ENCODE measurements at regions of chr7 and their contacts with region 1.

Region 1: DNA sequence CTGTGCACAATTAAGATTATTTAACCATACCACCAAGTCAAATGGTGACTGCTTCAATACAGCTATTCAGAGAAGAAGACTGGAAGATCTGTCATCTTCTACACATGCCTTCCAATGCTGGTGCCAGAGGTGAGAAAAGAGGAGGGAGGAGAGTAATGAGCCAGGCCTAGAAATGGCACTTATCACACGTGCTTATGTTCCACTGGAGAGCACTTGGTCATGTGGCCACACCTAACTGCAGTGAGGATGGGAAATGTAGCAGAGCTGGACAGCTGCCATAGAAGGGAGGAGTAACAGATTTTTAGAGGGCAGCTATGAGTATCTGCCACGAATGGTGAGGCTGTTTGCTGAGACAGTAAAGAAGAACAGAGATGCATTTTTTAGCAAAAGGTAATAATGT is 77.1 kb downstream of the MPLKIP start:
- DNase-seq: no peak
- H3K4me3 ChIP-seq: no peak overlapping the region
- H3K27ac ChIP-seq: no peak overlapping the region
- H3K4me1 ChIP-seq: no peaks in the 10 kb centered on the region
- H3K27me3 ChIP-seq: no peaks in the 10 kb centered on the region
- CTCF ChIP-seq: no peak
- EP300 ChIP-seq: no peak
- POLR2A ChIP-seq: no peak
- RAD21 ChIP-seq: no peak

Region 2: DNA sequence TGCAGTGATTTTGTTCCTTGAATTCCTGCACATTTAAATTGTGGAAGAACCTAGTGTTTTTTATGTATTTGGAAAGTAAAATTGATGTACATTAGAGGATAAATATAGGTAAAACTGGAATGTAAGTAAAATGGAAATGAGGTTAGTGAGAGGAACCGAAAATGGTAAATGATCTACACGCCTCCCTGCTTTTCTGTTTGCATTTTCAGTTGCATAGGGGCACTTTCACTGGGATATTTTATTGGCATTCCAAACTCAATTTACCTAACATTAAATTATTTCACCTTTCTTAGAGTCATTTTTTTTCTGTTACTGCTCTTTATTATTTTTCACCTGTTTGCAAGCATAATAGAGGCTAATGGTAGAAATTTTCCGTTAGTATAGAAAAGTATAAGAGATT is 99.3 kb before region 1 on chr7:
- CTCF ChIA-PET with region 1: interaction called, 20 read pairs
- POLR2A ChIA-PET with region 1: no interaction called
- DNase-seq: no peak
- H3K4me3 ChIP-seq: no peak overlapping the region
- H3K27ac ChIP-seq: no peak overlapping the region
- H3K4me1 ChIP-seq: no peaks in the 10 kb centered on the region; a peak in 1 of 7 replicates
- H3K27me3 ChIP-seq: no peaks in the 10 kb centered on the region
- CTCF ChIP-seq: no peak
- EP300 ChIP-seq: no peak
- POLR2A ChIP-seq: no peak
- RAD21 ChIP-seq: no peak

Region 3: GRCh38 chr7:40041456-40041855 is 15.8 kb before region 1 on chr7:
- CTCF ChIA-PET with region 1: interaction called, 10 read pairs
- POLR2A ChIA-PET with region 1: no interaction called
- DNase-seq: no peak
- H3K4me3 ChIP-seq: no peak overlapping the region
- H3K27ac ChIP-seq: no peak overlapping the region
- H3K4me1 ChIP-seq: no peaks in the 10 kb centered on the region
- H3K27me3 ChIP-seq: no peaks in the 10 kb centered on the region
- CTCF ChIP-seq: no peak
- EP300 ChIP-seq: no peak
- POLR2A ChIP-seq: no peak
- RAD21 ChIP-seq: no peak